Activated CD8-positive, alpha-beta T cell treated with anti-CD3 and anti-CD28 coated beads for 36 hours (primary cell): ENCODE measurements at regions of chr1 and their contacts with region 1.

Region 1: DNA sequence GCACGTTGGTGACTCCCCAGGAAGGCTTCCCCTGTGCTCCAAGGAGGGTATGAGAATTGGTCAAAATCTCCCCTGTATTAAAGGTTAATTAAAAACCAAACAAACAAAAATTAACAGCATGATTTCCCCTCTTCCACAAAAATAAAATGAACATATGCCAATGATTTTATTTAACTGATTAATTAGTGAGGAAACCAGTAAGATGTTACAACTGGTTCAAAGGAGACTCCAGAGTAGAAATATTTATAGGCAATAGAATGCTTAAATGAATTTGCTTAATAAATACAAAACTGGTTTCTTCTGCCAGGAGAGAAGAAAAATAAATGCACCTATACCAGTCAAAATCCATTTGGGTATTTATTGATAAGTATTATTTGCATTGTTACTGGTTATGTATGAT is 249.5 kb upstream of the DEPDC1 start:
- DNase-seq: no peak
- ATAC-seq: no peak
- H3K4me3 Mint-ChIP-seq: no peak overlapping the region
- H3K27ac Mint-ChIP-seq: no peak overlapping the region
- H3K4me1 Mint-ChIP-seq: no peaks in the 10 kb centered on the region
- H3K27me3 Mint-ChIP-seq: no peaks in the 10 kb centered on the region
- CTCF ChIP-seq: no peak

Region 2: GRCh38 chr1:68723791-68724190 is 22.6 kb before region 1 on chr1:
- CTCF ChIA-PET with region 1: no interaction called
- POLR2A ChIA-PET with region 1: no interaction called
- intact Hi-C with region 1: loop called (anchors 2 kb)
- DNase-seq: no peak
- ATAC-seq: no peak
- H3K4me3 Mint-ChIP-seq: no peak overlapping the region
- H3K27ac Mint-ChIP-seq: no peak overlapping the region
- H3K4me1 Mint-ChIP-seq: no peaks in the 10 kb centered on the region
- H3K27me3 Mint-ChIP-seq: no peaks in the 10 kb centered on the region
- CTCF ChIP-seq: no peak